ENCODE measurements at regions of chr3 and their contacts with region 1.

Region 1: GRCh38 chr3:123081718-123082369 is 15.0 kb downstream of the PDIA5 start:
- DNase-seq: no peak
- H3K4me3 ChIP-seq: no peak overlapping the region
- H3K27ac ChIP-seq: no peak overlapping the region
- H3K4me1 ChIP-seq: peaks cover 5 to 27% (median 16%) of the 10 kb centered on the region in 4 experiments; a peak in 6 of 7 replicates
- H3K27me3 ChIP-seq: no peaks in the 10 kb centered on the region
- CTCF ChIP-seq: no peak
- EP300 ChIP-seq: no peak
- POLR2A ChIP-seq: no peak
- RAD21 ChIP-seq: no peak

Region 2: DNA sequence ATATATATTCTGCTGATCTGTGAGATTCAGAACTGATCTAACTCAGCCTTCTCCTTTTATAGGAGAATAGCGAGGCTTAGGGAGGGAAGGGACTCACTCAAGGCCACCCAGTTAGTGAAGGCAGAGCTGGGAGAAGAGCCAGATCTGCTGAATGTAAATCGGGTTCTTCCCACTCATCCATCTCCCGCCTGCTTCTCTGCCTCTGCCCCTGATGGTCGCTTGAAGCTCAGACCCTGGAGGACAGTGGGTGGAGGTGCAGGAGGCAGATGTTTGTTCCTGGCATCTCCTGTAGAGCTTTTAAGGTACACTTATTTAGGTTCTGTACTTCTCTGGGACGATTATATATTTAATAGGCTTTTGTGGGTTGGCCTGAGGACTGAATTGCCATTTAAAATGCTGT is 10.7 kb before region 1 on chr3:
- CTCF ChIA-PET with region 1: interaction called, 17 read pairs
- POLR2A ChIA-PET with region 1: interaction called, 5 read pairs
- DNase-seq: no peak
- H3K4me3 ChIP-seq: no peak overlapping the region
- H3K27ac ChIP-seq: no peak overlapping the region
- H3K4me1 ChIP-seq: peaks cover 7 to 17% (median 13%) of the 10 kb centered on the region in 4 experiments
- H3K27me3 ChIP-seq: peaks cover 0 to 6% (median 5%) of the 10 kb centered on the region in 4 experiments; a peak in 5 of 7 replicates
- CTCF ChIP-seq: peak; percentile 38 to 60 (median 48)
- EP300 ChIP-seq: no peak
- POLR2A ChIP-seq: no peak
- RAD21 ChIP-seq: peak; percentile 27 to 52; a peak in 3 of 4 replicates

Region 3: DNA sequence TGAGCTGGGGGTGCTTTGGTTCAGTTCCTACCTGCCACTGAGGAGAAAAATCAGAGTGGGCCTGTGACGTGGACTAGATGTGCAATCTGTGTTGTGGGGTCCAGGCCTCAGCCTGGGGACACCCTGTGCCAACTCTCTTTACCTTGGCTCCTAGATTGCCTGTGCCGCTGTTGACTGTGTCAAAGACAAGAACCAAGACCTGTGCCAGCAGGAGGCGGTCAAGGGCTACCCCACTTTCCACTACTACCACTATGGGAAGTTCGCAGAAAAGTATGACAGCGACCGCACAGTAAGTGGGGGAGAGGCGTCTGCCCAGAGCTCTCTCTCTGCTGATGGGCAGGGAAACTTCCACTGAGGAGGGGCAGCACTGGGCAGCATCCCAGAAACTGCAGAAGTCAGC is 79.3 kb after region 1 on chr3:
- CTCF ChIA-PET with region 1: no interaction called
- POLR2A ChIA-PET with region 1: no interaction called
- DNase-seq: peak in 1 of 2 experiments; percentile 73
- H3K4me3 ChIP-seq: no peak overlapping the region
- H3K27ac ChIP-seq: no peak overlapping the region
- H3K4me1 ChIP-seq: no peaks in the 10 kb centered on the region
- H3K27me3 ChIP-seq: no peaks in the 10 kb centered on the region
- CTCF ChIP-seq: peak; percentile 62 to 67 (median 64)
- EP300 ChIP-seq: no peak
- POLR2A ChIP-seq: no peak
- RAD21 ChIP-seq: peak; percentile 60 to 67